CD8-positive, alpha-beta memory T cell (primary cell): ENCODE measurements at regions of chr2 and their contacts with region 1.

Region 1: DNA sequence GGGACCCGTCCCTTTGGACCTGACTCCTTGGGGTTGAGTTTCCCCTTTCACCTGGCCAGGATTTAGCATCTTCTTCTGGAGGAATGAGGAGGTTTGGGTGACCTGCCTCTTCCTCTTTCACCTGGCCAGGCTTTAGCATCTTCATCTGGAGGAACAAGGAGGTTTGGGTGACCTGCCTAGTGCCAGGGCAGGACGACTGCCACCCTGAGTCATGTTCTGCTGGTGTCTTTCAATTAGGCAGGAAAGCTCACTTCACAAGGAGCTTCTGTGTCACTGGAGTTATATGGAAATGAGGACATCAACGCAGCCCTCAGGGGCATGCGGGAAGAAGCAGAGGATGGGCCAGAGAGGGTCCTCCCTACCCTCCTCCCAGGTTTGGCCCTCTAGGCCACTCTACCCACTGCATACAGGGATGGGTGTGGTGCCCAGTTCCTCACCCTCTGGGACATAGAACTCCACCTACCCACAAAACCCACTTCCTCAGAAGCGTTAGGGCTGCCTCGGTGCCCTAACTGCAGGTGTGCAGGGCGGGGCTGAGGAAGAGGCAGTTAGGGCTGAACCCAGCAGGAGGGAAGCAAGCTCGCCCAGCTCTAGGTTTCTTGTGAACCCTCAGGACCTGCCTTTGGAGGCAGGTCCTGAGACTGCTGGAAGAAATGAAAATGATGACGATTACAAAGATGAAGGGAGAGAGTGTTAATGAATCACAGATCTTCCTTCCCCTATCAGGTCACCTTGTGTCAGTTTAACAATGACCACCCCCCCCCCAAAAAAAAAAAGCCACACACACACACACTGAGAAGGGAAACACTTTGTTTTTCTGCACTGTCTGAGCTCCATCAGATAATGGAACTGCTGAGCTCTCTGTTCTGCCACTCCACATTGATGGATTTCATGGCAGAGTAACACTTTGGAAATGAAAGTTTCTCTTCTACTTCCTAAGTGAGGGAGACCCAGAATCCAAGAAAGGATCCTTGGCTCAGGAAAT is 71.0 kb downstream of the ARL4C start:
- DNase-seq: peak; percentile 63 to 91 (median 87)
- H3K4me3 ChIP-seq: peak overlapping the region; percentile 56
- H3K4me3 Mint-ChIP-seq: peak overlapping the region; percentile 58 to 89 (median 71)
- H3K27ac ChIP-seq: peak overlapping the region; percentile 84
- H3K27ac Mint-ChIP-seq: peak overlapping the region; percentile 96 to 100 (median 100)
- H3K4me1 ChIP-seq: peaks cover 90% of the 10 kb centered on the region
- H3K4me1 Mint-ChIP-seq: peaks cover 81 to 100% (median 91%) of the 10 kb centered on the region in 3 donors
- H3K27me3 ChIP-seq: no peaks in the 10 kb centered on the region
- H3K27me3 Mint-ChIP-seq: peaks cover 0 to 4% of the 10 kb centered on the region in 2 donors

Region 2: DNA sequence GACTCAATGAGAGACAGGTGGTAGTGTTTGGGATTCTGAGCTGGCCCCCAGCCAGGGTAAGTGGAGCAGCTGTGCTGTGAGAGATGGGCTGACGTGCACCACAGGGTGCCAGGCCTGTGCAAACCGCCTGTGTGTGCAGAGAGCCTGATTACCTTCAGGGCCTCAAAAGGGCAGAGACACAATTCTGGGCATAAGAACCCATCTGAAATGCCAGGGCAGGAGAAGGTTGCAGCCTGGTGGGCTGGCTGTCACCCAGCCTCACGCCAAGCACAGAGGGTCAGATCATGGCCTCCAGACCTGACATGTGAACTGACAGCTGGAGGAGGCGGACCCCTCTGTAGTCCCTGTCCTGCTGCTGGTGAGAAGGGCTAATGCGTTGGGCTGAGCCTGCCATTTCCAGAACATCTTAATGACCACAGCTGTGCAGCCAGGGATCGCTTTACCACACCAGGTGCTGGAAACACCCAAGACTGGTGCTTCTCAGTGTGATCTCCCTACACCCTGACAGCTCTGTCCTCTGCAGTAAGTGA is 30.0 kb before region 1 on chr2:
- CTCF ChIA-PET with region 1: no interaction called
- POLR2A ChIA-PET with region 1: no interaction called
- DNase-seq: no peak
- H3K4me3 ChIP-seq: no peak overlapping the region
- H3K4me3 Mint-ChIP-seq: no peak overlapping the region
- H3K27ac ChIP-seq: no peak overlapping the region
- H3K27ac Mint-ChIP-seq: peak overlapping the region in 3 of 8 donors; percentile 52 to 92 (median 90)
- H3K4me1 ChIP-seq: peaks cover 60% of the 10 kb centered on the region
- H3K4me1 Mint-ChIP-seq: peaks cover 42 to 60% (median 59%) of the 10 kb centered on the region in 3 donors
- H3K27me3 ChIP-seq: no peaks in the 10 kb centered on the region
- H3K27me3 Mint-ChIP-seq: no peaks in the 10 kb centered on the region

Region 3: GRCh38 chr2:234446404-234447076 is 20.6 kb after region 1 on chr2:
- CTCF ChIA-PET with region 1: interaction called, 12 read pairs
- POLR2A ChIA-PET with region 1: interaction called, 20 read pairs
- DNase-seq: peak; percentile 69 to 95 (median 90)
- H3K4me3 ChIP-seq: peak overlapping the region; percentile 22
- H3K4me3 Mint-ChIP-seq: peak overlapping the region; percentile 49 to 90 (median 81)
- H3K27ac ChIP-seq: peak overlapping the region; percentile 89
- H3K27ac Mint-ChIP-seq: peak overlapping the region; percentile 97 to 100 (median 100)
- H3K4me1 ChIP-seq: peaks cover 96% of the 10 kb centered on the region
- H3K4me1 Mint-ChIP-seq: peaks cover 76 to 90% (median 88%) of the 10 kb centered on the region in 3 donors
- H3K27me3 ChIP-seq: no peaks in the 10 kb centered on the region
- H3K27me3 Mint-ChIP-seq: peaks cover 0 to 4% of the 10 kb centered on the region in 2 donors

Region 4: DNA sequence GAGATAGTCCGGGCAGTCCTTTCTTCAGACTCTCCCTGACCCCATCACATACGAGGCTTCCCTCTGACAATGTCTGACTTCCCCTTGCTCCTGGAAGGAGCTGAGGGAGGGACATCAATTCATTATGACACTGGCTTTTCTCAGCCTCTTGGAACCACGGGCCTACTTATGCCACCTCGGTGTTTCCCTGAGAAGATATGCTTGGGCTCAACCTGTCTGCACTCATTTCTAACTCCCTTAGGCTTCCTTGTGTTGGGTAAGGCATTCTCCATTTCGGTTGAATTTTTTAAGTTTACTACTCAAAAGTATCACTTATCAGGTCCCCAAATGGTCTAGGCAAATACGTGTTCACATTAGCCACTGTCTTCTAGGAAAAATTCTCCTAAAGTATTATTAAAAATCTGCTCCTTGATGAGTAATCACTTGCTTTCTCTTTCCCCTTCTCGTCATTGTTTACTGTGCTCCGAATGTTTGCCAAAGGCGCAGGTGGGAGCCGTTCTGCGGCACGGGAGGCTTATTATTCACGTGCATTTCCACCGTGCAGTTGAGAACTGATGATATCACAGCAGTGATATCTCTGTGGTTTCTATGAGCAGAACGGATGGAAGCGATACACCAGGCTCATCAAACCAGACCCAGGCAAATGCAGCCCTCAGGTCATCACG is 37.8 kb after region 1 on chr2:
- CTCF ChIA-PET with region 1: interaction called, 5 read pairs
- POLR2A ChIA-PET with region 1: interaction called, 19 read pairs
- DNase-seq: peak; percentile 52 to 85 (median 83)
- H3K4me3 ChIP-seq: peak overlapping the region; percentile 41
- H3K4me3 Mint-ChIP-seq: peak overlapping the region; percentile 18 to 86 (median 68)
- H3K27ac ChIP-seq: peak overlapping the region; percentile 68
- H3K27ac Mint-ChIP-seq: peak overlapping the region; percentile 89 to 100 (median 96)
- H3K4me1 ChIP-seq: peaks cover 65% of the 10 kb centered on the region
- H3K4me1 Mint-ChIP-seq: peaks cover 58 to 78% (median 75%) of the 10 kb centered on the region in 3 donors
- H3K27me3 ChIP-seq: no peaks in the 10 kb centered on the region
- H3K27me3 Mint-ChIP-seq: no peaks in the 10 kb centered on the region

Region 5: GRCh38 chr2:234483568-234484251 is 57.8 kb after region 1 on chr2:
- CTCF ChIA-PET with region 1: interaction called, 13 read pairs
- POLR2A ChIA-PET with region 1: interaction called, 21 read pairs
- DNase-seq: peak; percentile 74 to 92 (median 89)
- H3K4me3 ChIP-seq: peak overlapping the region; percentile 3
- H3K4me3 Mint-ChIP-seq: peak overlapping the region; percentile 74 to 88 (median 75)
- H3K27ac ChIP-seq: peak overlapping the region; percentile 84
- H3K27ac Mint-ChIP-seq: peak overlapping the region; percentile 94 to 100 (median 98)
- H3K4me1 ChIP-seq: peaks cover 69% of the 10 kb centered on the region
- H3K4me1 Mint-ChIP-seq: peaks cover 72 to 96% (median 96%) of the 10 kb centered on the region in 3 donors
- H3K27me3 ChIP-seq: no peaks in the 10 kb centered on the region
- H3K27me3 Mint-ChIP-seq: peaks cover 0 to 2% of the 10 kb centered on the region in 2 donors

Region 6: GRCh38 chr2:234500394-234501006 is 74.6 kb after region 1 on chr2:
- CTCF ChIA-PET with region 1: interaction called, 17 read pairs
- POLR2A ChIA-PET with region 1: interaction called, 23 read pairs
- DNase-seq: peak; percentile 60 to 86 (median 71)
- H3K4me3 ChIP-seq: no peak overlapping the region
- H3K4me3 Mint-ChIP-seq: peak overlapping the region; percentile 21 to 88 (median 67)
- H3K27ac ChIP-seq: no peak overlapping the region
- H3K27ac Mint-ChIP-seq: peak overlapping the region; percentile 85 to 99 (median 96)
- H3K4me1 ChIP-seq: peaks cover 33% of the 10 kb centered on the region
- H3K4me1 Mint-ChIP-seq: peaks cover 30 to 32% (median 31%) of the 10 kb centered on the region in 3 donors
- H3K27me3 ChIP-seq: no peaks in the 10 kb centered on the region
- H3K27me3 Mint-ChIP-seq: peaks cover 0 to 11% of the 10 kb centered on the region in 2 donors

Region 7: DNA sequence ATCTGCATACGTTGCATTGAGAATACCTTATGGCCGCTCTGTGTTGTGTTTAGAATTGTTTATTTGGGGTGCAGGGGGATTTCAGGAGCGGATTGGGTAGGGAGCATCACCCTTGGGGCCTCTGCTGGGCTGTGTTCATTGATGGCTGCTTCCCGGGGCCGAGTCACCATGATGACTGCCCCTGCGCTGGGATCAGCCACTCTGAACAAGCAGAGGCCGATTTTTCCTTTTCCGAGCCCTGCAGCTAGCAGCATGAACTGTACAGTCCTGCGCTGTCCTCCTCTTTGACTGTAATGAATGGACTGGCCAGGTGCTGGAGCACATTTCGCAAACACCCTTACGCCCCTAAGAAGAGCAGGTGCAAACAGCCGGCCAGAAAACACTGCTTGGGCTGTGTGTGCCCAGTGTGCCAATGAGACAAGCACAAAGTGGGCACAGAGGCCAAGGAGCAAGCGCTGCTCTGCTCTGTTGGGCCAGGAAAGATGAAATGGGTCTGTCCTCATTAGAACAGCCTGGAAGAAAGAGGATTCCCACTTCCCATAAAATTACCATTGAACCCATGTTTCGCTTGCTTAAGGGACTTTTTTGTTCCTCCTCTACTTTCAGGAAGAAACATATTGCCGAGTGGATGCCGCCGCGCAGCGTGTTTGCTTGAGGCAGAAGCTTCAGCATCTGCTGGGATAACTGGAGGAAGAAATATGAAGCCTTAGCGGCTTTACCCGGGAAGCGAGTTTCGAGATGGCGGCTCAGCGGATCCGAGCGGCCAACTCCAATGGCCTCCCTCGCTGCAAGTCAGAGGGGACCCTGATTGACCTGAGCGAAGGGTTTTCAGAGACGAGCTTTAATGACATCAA is 608.6 kb after region 1 on chr2:
- CTCF ChIA-PET with region 1: no interaction called
- POLR2A ChIA-PET with region 1: no interaction called
- DNase-seq: no peak
- H3K4me3 ChIP-seq: no peak overlapping the region
- H3K4me3 Mint-ChIP-seq: no peak overlapping the region
- H3K27ac ChIP-seq: no peak overlapping the region
- H3K27ac Mint-ChIP-seq: no peak overlapping the region
- H3K4me1 ChIP-seq: no peaks in the 10 kb centered on the region
- H3K4me1 Mint-ChIP-seq: no peaks in the 10 kb centered on the region
- H3K27me3 ChIP-seq: no peaks in the 10 kb centered on the region
- H3K27me3 Mint-ChIP-seq: peaks cover 0 to 6% of the 10 kb centered on the region in 2 donors